ENCODE measurements at regions of chr6 and their contacts with region 1.

Region 1: GRCh38 chr6:52503848-52504781 is 72.7 kb downstream of the TRAM2 start:
- DNase-seq: peak; percentile 99
- H3K4me3 ChIP-seq: no peak overlapping the region
- H3K27ac ChIP-seq: peak overlapping the region; percentile 73
- H3K4me1 ChIP-seq: peaks cover 42% of the 10 kb centered on the region
- H3K27me3 ChIP-seq: no peaks in the 10 kb centered on the region
- CTCF ChIP-seq: no peak

Region 2: GRCh38 chr6:52517502-52518278 is 13.6 kb after region 1 on chr6:
- CTCF ChIA-PET with region 1: interaction called, 14 read pairs
- dilution Hi-C with region 1: no loop called
- in situ Hi-C with region 1: no loop called
- intact Hi-C with region 1: loop called (anchors 1 kb)
- DNase-seq: peak; percentile 85
- H3K4me3 ChIP-seq: no peak overlapping the region
- H3K27ac ChIP-seq: peak overlapping the region; percentile 78
- H3K4me1 ChIP-seq: peaks cover 49% of the 10 kb centered on the region
- H3K27me3 ChIP-seq: no peaks in the 10 kb centered on the region
- CTCF ChIP-seq: no peak

Region 3: GRCh38 chr6:52543729-52544601 is 39.9 kb after region 1 on chr6:
- CTCF ChIA-PET with region 1: no interaction called
- dilution Hi-C with region 1: no loop called
- in situ Hi-C with region 1: no loop called
- intact Hi-C with region 1: loop called (anchors 1 kb)
- DNase-seq: no peak
- H3K4me3 ChIP-seq: no peak overlapping the region
- H3K27ac ChIP-seq: peak overlapping the region; percentile 8
- H3K4me1 ChIP-seq: peaks cover 62% of the 10 kb centered on the region
- H3K27me3 ChIP-seq: no peaks in the 10 kb centered on the region
- CTCF ChIP-seq: no peak

Region 4: DNA sequence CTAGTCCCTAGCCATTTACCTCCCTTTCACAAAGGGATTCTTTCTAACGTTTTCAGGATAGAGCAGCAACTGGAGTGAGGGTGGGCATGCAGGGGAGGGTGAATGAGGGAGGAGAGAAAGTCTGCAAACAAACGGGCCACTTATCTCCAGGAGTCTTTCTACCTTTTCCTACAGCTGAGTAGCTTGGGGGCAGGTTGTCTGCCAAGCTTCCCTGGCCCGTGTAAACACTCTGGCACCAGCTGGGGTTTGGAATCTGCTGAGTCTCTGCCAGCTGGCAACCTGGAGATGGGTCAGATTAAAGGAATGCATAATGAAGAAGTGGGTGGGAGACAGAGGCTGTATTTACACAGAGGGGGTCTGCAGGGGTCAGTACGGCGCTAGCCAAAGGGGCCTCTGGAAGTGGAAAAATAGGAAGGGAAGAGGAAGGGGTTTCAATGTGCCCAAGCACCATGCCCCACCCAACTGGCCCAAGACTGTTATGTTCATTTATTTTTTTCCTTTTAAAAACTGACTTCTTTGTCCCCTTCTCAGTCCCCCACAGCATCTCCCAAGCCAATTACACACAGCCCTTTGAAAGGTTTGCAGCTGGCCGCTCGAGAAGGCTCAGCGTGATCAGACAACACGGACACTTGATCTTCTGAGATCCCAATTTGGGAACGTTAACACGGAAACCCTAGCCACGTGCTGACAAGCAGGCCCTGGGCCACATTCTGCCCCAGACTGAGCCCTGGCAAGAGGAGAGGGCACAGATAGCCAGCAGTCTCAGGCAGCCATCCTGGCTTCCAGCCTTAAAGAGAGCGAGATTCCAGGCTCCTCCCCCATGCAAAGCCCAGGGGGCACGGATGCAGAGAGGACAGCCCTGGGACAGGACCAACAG is 47.5 kb after region 1 on chr6:
- CTCF ChIA-PET with region 1: no interaction called
- dilution Hi-C with region 1: no loop called
- in situ Hi-C with region 1: no loop called
- intact Hi-C with region 1: loop called (anchors 2 kb)
- DNase-seq: peak; percentile 66
- H3K4me3 ChIP-seq: no peak overlapping the region
- H3K27ac ChIP-seq: no peak overlapping the region
- H3K4me1 ChIP-seq: peaks cover 36% of the 10 kb centered on the region
- H3K27me3 ChIP-seq: no peaks in the 10 kb centered on the region
- CTCF ChIP-seq: no peak

Region 5: GRCh38 chr6:52577022-52577777 is 73.1 kb after region 1 on chr6 and contains the start of gene TRAM2:
- CTCF ChIA-PET with region 1: no interaction called
- dilution Hi-C with region 1: no loop called
- in situ Hi-C with region 1: no loop called
- intact Hi-C with region 1: loop called (anchors 1 kb)
- DNase-seq: peak; percentile 71
- H3K4me3 ChIP-seq: peak within 1 kb of the TSS; percentile 67 to 85 (median 83)
- H3K27ac ChIP-seq: peak within 1 kb of the TSS; percentile 70
- H3K4me1 ChIP-seq: peaks cover 22% of the 10 kb centered on the region
- H3K27me3 ChIP-seq: no peaks in the 10 kb centered on the region
- CTCF ChIP-seq: no peak
- total RNA-seq, gene TRAM2: 12.5 to 16.9 TPM

Region 6: GRCh38 chr6:52598123-52598823 is 94.2 kb after region 1 on chr6:
- CTCF ChIA-PET with region 1: no interaction called
- dilution Hi-C with region 1: no loop called
- in situ Hi-C with region 1: no loop called
- intact Hi-C with region 1: loop called (anchors 5 kb)
- DNase-seq: no peak
- H3K4me3 ChIP-seq: no peak overlapping the region
- H3K27ac ChIP-seq: no peak overlapping the region
- H3K4me1 ChIP-seq: peaks cover 12% of the 10 kb centered on the region
- H3K27me3 ChIP-seq: no peaks in the 10 kb centered on the region
- CTCF ChIP-seq: peak; percentile 60 to 71